Lower leg skin (tissue), 4 donors: ENCODE measurements at regions of chr2 and their contacts with region 1.

Region 1: GRCh38 chr2:177419274-177419673 is 26.7 kb downstream of the AGPS start:
- DNase-seq: no peak
- H3K4me3 ChIP-seq: no peak overlapping the region
- CTCF ChIP-seq: no peak
- POLR2A ChIP-seq: no peak

Region 2: DNA sequence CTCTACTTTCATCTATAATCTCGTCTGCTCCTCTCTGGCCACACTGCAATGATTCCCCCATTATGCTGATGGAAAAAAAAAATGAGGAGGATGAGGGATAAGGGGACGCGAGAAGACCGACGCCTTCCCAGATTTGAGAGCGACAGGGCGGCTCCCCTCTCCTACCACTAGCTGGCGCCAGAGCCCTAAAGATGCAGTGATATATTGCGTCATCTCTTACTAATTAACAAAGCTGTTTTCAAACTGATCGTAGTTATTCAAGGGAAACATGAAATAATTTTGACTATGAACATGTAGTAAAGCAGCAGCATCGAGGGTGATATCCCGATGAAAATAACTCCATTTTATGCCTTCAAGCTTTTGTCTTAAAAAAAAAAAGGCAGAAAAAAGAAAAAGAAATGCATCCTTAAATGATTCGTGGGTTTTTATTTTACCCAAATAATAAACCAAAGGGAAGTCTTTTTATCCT is 254.7 kb before region 1 on chr2:
- intact Hi-C with region 1: loop called (anchors 10 kb)
- DNase-seq: peak; percentile 89 to 95
- H3K4me3 ChIP-seq: no peak overlapping the region
- CTCF ChIP-seq: peak in 2 of 3 donors; percentile 66 to 96
- POLR2A ChIP-seq: no peak

Region 3: GRCh38 chr2:177348733-177349693 is 70.3 kb before region 1 on chr2:
- intact Hi-C with region 1: loop called (anchors 10 kb)
- DNase-seq: no peak
- H3K4me3 ChIP-seq: no peak overlapping the region
- CTCF ChIP-seq: no peak
- POLR2A ChIP-seq: no peak

Region 4: DNA sequence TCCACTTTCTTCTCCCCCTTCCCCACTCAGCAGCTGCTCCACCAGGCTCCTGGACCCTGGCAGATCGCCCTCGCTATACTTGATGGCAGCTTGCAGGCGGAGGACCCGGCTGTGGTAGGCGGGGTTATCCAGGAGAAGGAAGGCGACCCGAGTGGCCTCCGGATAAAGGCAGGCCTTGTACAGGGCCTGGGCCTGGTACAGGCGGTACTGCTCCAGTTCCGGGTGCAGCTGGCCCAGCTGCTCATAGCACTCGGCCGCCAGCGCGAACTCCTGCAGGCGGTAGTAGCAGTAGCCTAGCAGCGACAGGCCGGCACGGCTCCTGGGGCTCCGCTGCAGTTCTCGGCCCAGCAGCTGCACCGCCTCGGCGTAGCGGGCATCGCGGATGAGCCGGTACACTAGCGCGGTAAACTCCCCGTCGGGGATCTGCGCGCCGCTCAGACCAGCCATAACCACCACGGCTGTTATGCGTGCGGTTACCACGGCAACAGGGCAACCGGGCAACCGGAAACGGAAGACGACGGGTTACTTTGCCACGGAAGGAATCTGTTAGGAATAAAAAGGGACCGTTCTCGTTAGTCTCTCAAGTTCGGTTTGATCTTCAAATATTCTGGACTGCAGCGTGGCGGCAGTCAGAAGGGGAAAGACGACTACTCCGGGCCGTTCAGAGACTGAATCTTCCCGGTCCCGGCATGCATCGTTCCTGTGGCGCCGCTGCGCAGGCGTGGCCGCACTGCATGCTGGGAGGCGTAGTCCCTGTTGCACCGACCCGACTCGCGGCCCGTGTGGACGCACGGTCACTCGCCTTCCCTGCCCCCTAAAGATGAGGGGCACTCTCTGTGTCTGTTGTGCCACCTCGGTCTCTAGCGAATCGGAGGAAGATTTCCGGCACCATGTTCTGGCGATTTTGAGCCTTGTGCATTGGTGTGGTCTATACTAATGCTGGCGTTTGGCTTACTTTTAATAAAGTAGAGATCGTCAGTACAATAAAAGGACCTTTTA is 199.3 kb after region 1 on chr2:
- intact Hi-C with region 1: no loop called
- DNase-seq: peak; percentile 90 to 98
- H3K4me3 ChIP-seq: peak overlapping the region; percentile 60
- CTCF ChIP-seq: no peak
- POLR2A ChIP-seq: no peak

Region 5: GRCh38 chr2:178306352-178307073 is 887.2 kb after region 1 on chr2:
- intact Hi-C with region 1: no loop called
- DNase-seq: peak in 1 of 2 donors; percentile 45
- H3K4me3 ChIP-seq: no peak overlapping the region
- CTCF ChIP-seq: no peak
- POLR2A ChIP-seq: no peak

Region 6: GRCh38 chr2:178628605-178629004 is 1209.3 kb after region 1 on chr2:
- intact Hi-C with region 1: no loop called
- DNase-seq: no peak
- H3K4me3 ChIP-seq: no peak overlapping the region
- CTCF ChIP-seq: no peak
- POLR2A ChIP-seq: no peak